Cardiac septum (tissue), 1 donor: ENCODE measurements at regions of chr2 and their contacts with region 1.

Region 1: DNA sequence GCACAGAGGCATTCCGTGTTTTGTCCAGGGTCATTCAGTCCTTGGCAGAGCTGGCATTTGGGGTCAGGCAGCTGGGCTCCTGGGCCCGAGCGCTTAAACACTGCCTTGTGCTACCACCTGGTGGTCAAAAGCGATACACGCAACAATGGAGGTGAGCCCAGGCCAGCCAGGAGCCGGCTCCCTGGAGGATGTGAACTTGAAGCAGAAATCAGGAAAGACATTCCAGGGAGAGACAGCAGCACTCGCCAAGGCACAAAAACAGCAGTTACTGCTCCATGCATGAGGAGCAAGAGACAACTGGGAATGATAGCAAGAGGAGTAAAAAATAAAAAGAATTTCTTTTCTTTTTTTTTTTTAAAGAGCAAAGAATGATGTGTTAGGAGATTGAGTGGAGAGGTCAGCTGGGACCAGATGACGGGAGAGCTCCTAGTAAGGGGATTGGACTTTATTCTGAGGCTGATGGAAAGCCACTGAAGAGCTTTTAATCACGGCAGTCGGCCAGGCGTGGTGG is 20.7 kb downstream of the SCYGR8 start:
- DNase-seq: peak; percentile 82

Region 2: GRCh38 chr2:227025510-227025909 is 740.9 kb before region 1 on chr2:
- intact Hi-C with region 1: no loop called
- DNase-seq: no peak

Region 3: DNA sequence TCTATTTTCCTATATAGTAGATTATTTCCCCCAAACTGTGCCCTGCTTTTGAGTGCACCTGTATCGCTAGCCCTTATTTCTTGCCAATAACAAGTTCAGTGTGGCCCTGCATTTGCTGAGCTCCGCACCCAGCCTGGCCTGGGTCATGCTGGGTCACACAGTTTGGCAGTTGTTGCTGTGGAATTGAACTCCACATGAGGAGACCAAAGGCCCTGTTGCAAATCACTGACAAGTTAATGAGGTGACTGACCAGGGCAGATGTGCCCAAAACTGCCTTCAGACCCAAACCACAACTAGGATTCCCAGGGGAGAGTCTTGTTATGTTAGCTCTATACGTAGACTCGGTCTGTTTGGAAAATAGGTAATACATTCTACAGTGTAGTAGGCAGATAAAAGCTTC is 633.4 kb before region 1 on chr2:
- intact Hi-C with region 1: loop called (anchors 5 kb)
- DNase-seq: no peak

Region 4: DNA sequence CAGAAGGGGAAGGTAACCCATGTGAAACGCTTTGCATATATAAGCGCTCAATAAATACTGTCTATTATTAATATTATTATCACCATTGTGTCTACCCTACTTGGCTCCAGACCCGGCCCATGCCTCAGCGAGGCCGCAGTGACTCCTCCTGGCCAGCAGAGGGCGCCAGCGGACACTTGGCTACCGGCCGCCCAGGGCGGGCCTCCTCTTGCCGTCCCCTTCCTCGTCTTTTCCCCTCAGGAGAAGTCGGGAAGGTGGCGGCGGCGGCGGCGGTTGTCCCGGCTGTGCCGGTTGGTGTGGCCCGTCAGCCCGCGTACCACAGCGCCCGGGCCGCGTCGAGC is 294.5 kb before region 1 on chr2 and contains the start of gene AGFG1:
- intact Hi-C with region 1: loop called (anchors 2 kb)
- DNase-seq: peak; percentile 96
- total RNA-seq, gene AGFG1: 58.2 TPM

Region 5: DNA sequence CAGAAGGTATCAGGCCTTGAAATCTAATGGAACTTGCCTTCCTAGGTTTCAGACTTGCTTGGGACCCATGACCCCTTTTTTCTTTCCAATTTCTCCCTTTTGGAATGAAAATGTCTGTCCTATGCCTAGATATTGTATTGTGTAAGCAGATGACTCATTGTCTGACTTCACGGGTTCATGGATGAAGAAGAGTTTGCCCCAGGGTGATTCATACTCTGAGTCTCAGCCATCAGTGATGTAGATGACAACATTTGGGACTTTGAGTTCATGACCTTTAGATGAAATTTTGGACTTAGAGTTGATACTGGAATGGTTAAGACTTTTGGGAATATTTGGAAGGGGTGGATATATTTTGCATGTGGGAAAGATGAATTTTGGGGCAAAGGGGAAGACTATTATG is 111.0 kb before region 1 on chr2:
- intact Hi-C with region 1: loop called (anchors 1 kb)
- DNase-seq: no peak

Region 6: GRCh38 chr2:227848586-227848985 is 82.2 kb after region 1 on chr2:
- intact Hi-C with region 1: no loop called
- DNase-seq: no peak

Region 7: GRCh38 chr2:227960317-227960716 is 193.9 kb after region 1 on chr2:
- intact Hi-C with region 1: no loop called
- DNase-seq: no peak